ENCODE measurements at regions of chr7 and their contacts with region 1.

Region 1: GRCh38 chr7:121994625-121995410 is 121.9 kb downstream of the PTPRZ1 start:
- DNase-seq: peak; percentile 81
- ATAC-seq: peak; percentile 97
- H3K4me3 ChIP-seq: no peak overlapping the region
- H3K27ac ChIP-seq: no peak overlapping the region
- H3K4me1 ChIP-seq: no peaks in the 10 kb centered on the region
- H3K27me3 ChIP-seq: no peaks in the 10 kb centered on the region
- CTCF ChIP-seq: peak; percentile 75
- POLR2A ChIP-seq: no peak
- RAD21 ChIP-seq: peak; percentile 80

Region 2: GRCh38 chr7:121113288-121113687 is 881.5 kb before region 1 on chr7:
- CTCF ChIA-PET with region 1: no interaction called
- POLR2A ChIA-PET with region 1: no interaction called
- dilution Hi-C with region 1: no loop called
- in situ Hi-C with region 1: no loop called
- intact Hi-C with region 1: no loop called
- DNase-seq: peak; percentile 70
- ATAC-seq: peak; percentile 85
- H3K4me3 ChIP-seq: no peak overlapping the region
- H3K27ac ChIP-seq: no peak overlapping the region
- H3K4me1 ChIP-seq: peaks cover 9% of the 10 kb centered on the region
- H3K27me3 ChIP-seq: no peaks in the 10 kb centered on the region
- CTCF ChIP-seq: no peak
- POLR2A ChIP-seq: no peak
- RAD21 ChIP-seq: no peak

Region 3: DNA sequence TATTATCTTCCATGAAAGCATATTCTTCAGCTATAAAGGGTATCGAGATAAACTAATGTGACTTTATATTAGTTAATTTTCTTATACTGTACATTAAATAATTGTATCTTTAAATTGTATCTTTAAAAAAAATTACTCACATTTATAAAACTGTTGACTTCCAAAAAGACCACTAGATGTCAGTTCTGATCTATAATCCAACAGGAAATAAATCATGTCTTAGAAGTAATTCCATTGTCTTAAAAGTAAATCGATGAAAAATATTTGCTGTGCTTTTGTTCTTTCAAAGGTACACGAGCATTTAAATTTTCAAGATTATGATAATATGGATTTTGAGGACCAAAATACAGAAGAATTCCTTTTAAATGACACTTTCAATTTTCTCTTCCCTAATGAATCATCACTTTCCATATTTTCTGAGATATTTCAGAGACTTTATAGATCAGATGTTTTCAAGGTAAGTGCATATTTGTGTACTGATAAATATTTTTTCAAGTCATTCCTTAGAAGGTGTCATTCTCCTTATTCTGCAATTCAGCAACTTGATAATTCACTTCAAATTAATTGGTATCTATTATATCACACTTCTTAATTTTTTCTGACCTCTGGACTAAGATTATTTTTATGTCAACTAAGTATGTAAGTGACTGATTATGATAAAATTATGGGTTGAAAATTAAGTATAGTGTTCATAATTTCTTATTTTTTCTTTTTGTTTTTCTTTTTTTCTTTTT is 867.9 kb before region 1 on chr7:
- CTCF ChIA-PET with region 1: no interaction called
- POLR2A ChIA-PET with region 1: no interaction called
- dilution Hi-C with region 1: no loop called
- in situ Hi-C with region 1: no loop called
- intact Hi-C with region 1: loop called (anchors 10 kb)
- DNase-seq: peak; percentile 27
- ATAC-seq: no peak
- H3K4me3 ChIP-seq: no peak overlapping the region
- H3K27ac ChIP-seq: no peak overlapping the region
- H3K4me1 ChIP-seq: no peaks in the 10 kb centered on the region
- H3K27me3 ChIP-seq: no peaks in the 10 kb centered on the region
- CTCF ChIP-seq: 0 out of 2 replicates have a peak, but pooled peaks have one; percentile 33
- POLR2A ChIP-seq: no peak
- RAD21 ChIP-seq: peak; percentile 42

Region 4: GRCh38 chr7:121547544-121548092 is 447.2 kb before region 1 on chr7:
- CTCF ChIA-PET with region 1: no interaction called
- POLR2A ChIA-PET with region 1: no interaction called
- dilution Hi-C with region 1: no loop called
- in situ Hi-C with region 1: no loop called
- intact Hi-C with region 1: loop called (anchors 5 kb)
- DNase-seq: peak; percentile 78
- ATAC-seq: peak; percentile 88
- H3K4me3 ChIP-seq: no peak overlapping the region
- H3K27ac ChIP-seq: no peak overlapping the region
- H3K4me1 ChIP-seq: 0 out of 2 replicates have a peak, but pooled peaks cover 3% of the 10 kb centered on the region
- H3K27me3 ChIP-seq: peaks cover 4% of the 10 kb centered on the region
- CTCF ChIP-seq: peak; percentile 91
- POLR2A ChIP-seq: no peak
- RAD21 ChIP-seq: peak; percentile 88

Region 5: GRCh38 chr7:121744319-121744718 is 250.5 kb before region 1 on chr7:
- CTCF ChIA-PET with region 1: interaction called, 14 read pairs
- POLR2A ChIA-PET with region 1: no interaction called
- dilution Hi-C with region 1: no loop called
- in situ Hi-C with region 1: loop called (anchors 10 kb)
- intact Hi-C with region 1: no loop called
- DNase-seq: no peak
- ATAC-seq: no peak
- H3K4me3 ChIP-seq: no peak overlapping the region
- H3K27ac ChIP-seq: no peak overlapping the region
- H3K4me1 ChIP-seq: no peaks in the 10 kb centered on the region
- H3K27me3 ChIP-seq: no peaks in the 10 kb centered on the region
- CTCF ChIP-seq: no peak
- POLR2A ChIP-seq: no peak
- RAD21 ChIP-seq: no peak

Region 6: GRCh38 chr7:121872831-121873288 is 122.0 kb before region 1 on chr7 and contains the start of gene PTPRZ1:
- CTCF ChIA-PET with region 1: no interaction called
- POLR2A ChIA-PET with region 1: no interaction called
- dilution Hi-C with region 1: no loop called
- in situ Hi-C with region 1: no loop called
- intact Hi-C with region 1: loop called (anchors 1 kb)
- DNase-seq: peak; percentile 2
- ATAC-seq: peak; percentile 91
- H3K4me3 ChIP-seq: peak within 1 kb of the TSS; percentile 46
- H3K27ac ChIP-seq: no peak within 1 kb of the TSS
- H3K4me1 ChIP-seq: no peaks in the 10 kb centered on the region
- H3K27me3 ChIP-seq: peaks cover 34% of the 10 kb centered on the region
- CTCF ChIP-seq: no peak
- POLR2A ChIP-seq: no peak
- RAD21 ChIP-seq: no peak
- total RNA-seq, gene PTPRZ1: not detected in 2 replicates